ENCODE measurements at regions of chr1 and their contacts with region 1.

Region 1: DNA sequence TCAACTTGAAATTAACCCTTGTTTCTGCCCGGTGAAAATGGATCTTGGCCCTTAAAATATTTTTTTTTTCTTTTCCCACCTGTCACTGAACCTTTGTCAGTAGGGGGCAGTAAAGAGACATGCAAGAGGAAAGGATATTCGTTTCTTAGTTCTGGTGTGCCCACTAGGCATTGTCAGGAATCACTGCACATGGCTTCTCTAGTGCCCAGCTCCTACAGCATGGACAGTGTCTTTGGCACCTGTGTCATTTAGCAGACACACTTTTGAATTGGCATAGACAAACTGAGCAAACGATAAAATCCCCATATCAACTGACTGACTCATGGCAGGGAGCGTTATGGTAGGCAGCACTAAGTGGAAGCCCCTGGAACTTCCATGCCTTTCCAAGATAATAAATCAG is 1048.1 kb downstream of the BRINP3 start:
- DNase-seq: peak; percentile 35
- H3K4me3 ChIP-seq: no peak overlapping the region
- H3K27ac ChIP-seq: no peak overlapping the region
- H3K4me1 ChIP-seq: no peaks in the 10 kb centered on the region
- H3K27me3 ChIP-seq: no peaks in the 10 kb centered on the region
- CTCF ChIP-seq: peak; percentile 49 to 59
- POLR2A ChIP-seq: no peak

Region 2: GRCh38 chr1:189678779-189679178 is 249.2 kb after region 1 on chr1:
- CTCF ChIA-PET with region 1: no interaction called
- POLR2A ChIA-PET with region 1: no interaction called
- dilution Hi-C with region 1: no loop called
- intact Hi-C with region 1: loop called (anchors 10 kb)
- DNase-seq: no peak
- H3K4me3 ChIP-seq: no peak overlapping the region
- H3K27ac ChIP-seq: no peak overlapping the region
- H3K4me1 ChIP-seq: no peaks in the 10 kb centered on the region
- H3K27me3 ChIP-seq: no peaks in the 10 kb centered on the region
- CTCF ChIP-seq: peak in 1 of 2 donors; percentile 13
- POLR2A ChIP-seq: no peak

Region 3: GRCh38 chr1:190320952-190321351 is 891.3 kb after region 1 on chr1:
- CTCF ChIA-PET with region 1: interaction called, 9 read pairs
- POLR2A ChIA-PET with region 1: interaction called, 3 read pairs
- dilution Hi-C with region 1: no loop called
- intact Hi-C with region 1: loop called (anchors 5 kb)
- DNase-seq: peak; percentile 29
- H3K4me3 ChIP-seq: no peak overlapping the region
- H3K27ac ChIP-seq: no peak overlapping the region
- H3K4me1 ChIP-seq: no peaks in the 10 kb centered on the region
- H3K27me3 ChIP-seq: no peaks in the 10 kb centered on the region
- CTCF ChIP-seq: peak in 1 of 2 donors; percentile 7
- POLR2A ChIP-seq: no peak

Region 4: DNA sequence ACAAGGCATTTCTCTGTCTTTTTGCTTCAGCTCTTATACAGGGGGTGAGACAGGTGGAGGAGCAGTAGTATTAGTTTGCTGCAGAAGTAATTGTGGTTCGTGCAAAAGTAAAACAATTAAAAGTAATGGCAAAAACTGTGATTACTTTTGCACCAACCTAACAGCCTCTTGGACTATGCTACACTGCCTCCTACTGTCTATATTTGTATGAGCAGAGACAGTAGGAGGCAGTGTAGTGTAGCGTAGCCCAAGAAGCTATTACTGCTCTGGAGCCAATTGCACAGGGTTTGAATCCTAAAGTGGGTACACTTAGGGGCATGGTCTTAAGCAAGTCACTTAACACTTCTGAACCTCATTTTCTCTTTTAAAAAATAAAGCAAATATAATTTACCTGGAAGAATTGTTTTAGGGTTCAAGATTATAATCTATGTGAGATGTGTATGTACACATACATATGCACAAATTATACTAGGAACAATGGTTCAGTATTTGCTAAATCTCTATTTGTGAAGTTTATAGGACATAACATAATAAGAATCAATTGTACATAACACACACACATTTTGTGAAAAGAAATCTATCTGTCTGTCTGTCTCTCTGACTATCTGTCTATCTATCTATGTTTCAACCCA is 944.2 kb after region 1 on chr1:
- CTCF ChIA-PET with region 1: interaction called, 3 read pairs
- POLR2A ChIA-PET with region 1: no interaction called
- dilution Hi-C with region 1: no loop called
- intact Hi-C with region 1: loop called (anchors 1 kb)
- DNase-seq: peak; percentile 32
- H3K4me3 ChIP-seq: no peak overlapping the region
- H3K27ac ChIP-seq: no peak overlapping the region
- H3K4me1 ChIP-seq: no peaks in the 10 kb centered on the region
- H3K27me3 ChIP-seq: no peaks in the 10 kb centered on the region
- CTCF ChIP-seq: peak; percentile 35 to 57
- POLR2A ChIP-seq: no peak

Region 5: GRCh38 chr1:190436615-190437014 is 1007.0 kb after region 1 on chr1:
- CTCF ChIA-PET with region 1: interaction called, 7 read pairs
- POLR2A ChIA-PET with region 1: no interaction called
- dilution Hi-C with region 1: no loop called
- intact Hi-C with region 1: loop called (anchors 5 kb)
- DNase-seq: peak; percentile 42
- H3K4me3 ChIP-seq: no peak overlapping the region
- H3K27ac ChIP-seq: no peak overlapping the region
- H3K4me1 ChIP-seq: no peaks in the 10 kb centered on the region
- H3K27me3 ChIP-seq: no peaks in the 10 kb centered on the region
- CTCF ChIP-seq: no peak
- POLR2A ChIP-seq: no peak